ENCODE measurements at regions of chr3 and their contacts with region 1.

Region 1: DNA sequence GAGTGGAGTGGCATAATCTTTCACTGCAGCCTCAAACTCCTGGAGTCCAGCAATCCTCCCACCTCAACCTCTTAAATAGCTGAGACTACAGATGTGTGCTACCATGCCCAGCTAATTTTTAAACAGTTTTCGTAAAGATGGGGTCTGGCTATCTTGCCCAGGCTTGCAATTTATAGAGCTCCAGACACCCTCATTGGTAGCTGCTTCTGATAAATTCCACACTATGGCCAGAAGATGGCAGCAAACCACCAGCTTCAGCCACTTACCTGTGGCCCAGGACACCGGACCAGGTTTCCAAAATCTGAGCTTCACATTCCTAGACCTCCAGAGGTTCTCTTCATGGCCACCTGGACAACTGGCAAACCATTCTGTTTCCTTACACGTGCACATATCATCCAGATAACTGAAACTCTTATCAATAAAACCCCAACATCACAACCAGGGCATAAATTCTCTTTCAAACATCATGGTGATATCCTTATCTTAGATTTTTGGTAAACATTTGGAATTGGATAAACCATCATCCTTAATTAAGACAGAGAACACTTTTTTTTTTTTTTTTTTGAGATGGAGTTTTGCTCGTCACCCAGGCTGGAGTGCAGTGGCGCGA is 28.9 kb downstream of the FBXW12 start:
- DNase-seq: peak; percentile 73
- ATAC-seq: peak; percentile 83
- H3K4me3 Mint-ChIP-seq: no peak overlapping the region
- H3K27ac Mint-ChIP-seq: no peak overlapping the region
- H3K4me1 Mint-ChIP-seq: no peaks in the 10 kb centered on the region
- H3K27me3 Mint-ChIP-seq: peaks cover 4% of the 10 kb centered on the region

Region 2: DNA sequence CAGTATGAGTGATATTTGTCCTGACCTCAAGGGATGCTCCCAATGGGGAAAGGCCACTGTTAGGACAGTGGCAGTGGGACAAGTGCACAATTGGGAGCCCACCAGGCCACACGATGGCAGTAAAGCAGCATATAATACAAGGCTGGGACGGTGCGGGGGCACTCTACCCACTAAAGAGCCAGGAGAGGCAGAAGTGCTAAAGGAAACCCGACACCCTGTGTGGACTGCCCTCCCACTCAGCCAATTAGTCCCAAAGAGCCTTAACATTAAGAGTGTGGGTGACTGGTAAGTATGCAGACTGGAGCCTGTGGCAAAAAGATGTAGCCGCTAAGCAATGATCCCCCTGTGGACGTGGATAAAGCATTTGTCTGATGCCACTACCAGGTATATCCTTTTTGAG is 168.2 kb before region 1 on chr3:
- CTCF ChIA-PET with region 1: interaction called, 10 read pairs
- DNase-seq: peak; percentile 81
- ATAC-seq: peak; percentile 98
- H3K4me3 Mint-ChIP-seq: no peak overlapping the region
- H3K27ac Mint-ChIP-seq: no peak overlapping the region
- H3K4me1 Mint-ChIP-seq: peaks cover 7% of the 10 kb centered on the region
- H3K27me3 Mint-ChIP-seq: peaks cover 3% of the 10 kb centered on the region

Region 3: DNA sequence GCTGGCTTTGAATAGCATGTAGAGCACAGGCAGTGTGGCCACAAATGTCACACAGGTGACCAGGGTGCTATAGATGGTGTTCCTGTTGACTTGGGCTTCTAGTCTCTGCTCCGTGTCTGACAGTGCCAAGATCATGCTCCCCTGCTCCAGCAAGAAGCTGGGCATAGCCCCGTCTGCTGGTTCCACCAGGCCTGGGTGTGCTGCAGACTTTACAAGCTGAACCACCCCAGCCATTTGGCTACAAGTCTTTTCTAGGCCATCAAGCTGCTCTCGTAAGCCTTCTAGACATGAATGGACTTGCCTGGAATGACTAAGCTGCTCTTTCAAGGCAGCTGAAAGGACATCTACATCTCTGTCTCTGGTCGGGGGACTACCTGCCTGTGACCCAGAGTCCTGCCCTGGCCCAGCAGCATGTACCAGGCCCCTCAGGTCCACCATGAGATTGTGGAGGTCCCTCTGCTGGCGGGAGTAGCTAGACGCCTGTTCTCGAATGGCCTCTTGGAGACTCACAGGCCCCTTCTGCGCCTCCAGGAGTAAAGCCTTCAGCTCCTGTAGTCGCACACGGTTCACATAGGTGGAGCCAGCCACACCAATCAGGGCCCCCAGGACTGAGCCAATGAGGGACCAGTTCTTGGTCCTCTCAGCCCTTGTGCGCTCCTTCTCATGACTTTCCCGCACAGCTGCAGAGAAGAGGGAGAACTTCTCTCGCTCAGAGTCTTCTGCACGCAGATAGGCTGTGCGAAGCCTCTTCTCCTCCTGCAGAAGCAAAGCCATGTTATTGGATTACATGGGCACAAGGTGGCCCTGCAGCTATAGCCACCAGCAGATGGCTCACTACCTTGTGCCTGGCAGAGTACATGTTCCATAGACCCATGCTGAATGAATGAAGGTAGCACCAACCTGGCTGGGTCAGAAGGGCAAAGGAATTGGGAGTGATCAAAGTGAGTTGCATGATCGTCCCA is 31.8 kb after region 1 on chr3:
- CTCF ChIA-PET with region 1: interaction called, 161 read pairs
- DNase-seq: no peak
- ATAC-seq: no peak
- H3K4me3 Mint-ChIP-seq: no peak overlapping the region
- H3K27ac Mint-ChIP-seq: no peak overlapping the region
- H3K4me1 Mint-ChIP-seq: peaks cover 18% of the 10 kb centered on the region
- H3K27me3 Mint-ChIP-seq: peaks cover 11% of the 10 kb centered on the region

Region 4: DNA sequence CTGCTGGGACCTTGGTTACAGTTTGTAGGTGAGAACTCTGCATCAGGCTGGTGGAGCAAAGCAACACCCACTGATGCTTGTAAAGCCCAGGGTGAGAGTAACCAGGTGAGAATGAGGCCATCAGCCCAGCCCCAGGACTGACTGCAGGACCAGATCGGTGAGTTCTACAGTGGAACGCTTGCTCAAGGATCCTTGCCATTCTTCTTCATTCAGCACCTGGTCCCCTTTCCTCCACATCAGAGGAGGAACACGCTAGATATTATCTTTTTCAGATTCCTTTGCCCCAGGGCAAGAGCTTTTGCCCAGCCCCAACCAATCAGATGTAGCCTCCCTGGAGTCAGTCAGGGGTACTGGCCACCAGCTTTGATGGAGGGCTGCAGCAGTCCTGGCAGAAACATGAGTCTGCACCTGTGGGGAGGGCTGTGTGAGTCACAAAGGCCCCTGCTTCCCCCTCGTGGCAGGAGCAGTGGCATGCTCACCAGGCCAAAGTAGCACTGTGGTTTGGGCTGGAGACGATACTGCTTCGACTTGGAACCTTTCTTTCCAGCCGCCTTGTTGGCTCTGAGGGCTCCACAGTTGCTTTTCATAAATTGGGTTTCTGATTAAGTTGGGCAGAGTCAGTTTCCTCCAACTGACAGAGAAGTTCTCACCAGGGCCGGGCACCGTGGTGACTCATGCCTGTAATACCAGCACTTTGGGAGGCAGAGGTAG is 106.6 kb after region 1 on chr3:
- CTCF ChIA-PET with region 1: interaction called, 30 read pairs
- DNase-seq: peak; percentile 89
- ATAC-seq: peak; percentile 83
- H3K4me3 Mint-ChIP-seq: peak overlapping the region; percentile 16
- H3K27ac Mint-ChIP-seq: peak overlapping the region; percentile 77
- H3K4me1 Mint-ChIP-seq: peaks cover 40% of the 10 kb centered on the region
- H3K27me3 Mint-ChIP-seq: peaks cover 6% of the 10 kb centered on the region

Region 5: DNA sequence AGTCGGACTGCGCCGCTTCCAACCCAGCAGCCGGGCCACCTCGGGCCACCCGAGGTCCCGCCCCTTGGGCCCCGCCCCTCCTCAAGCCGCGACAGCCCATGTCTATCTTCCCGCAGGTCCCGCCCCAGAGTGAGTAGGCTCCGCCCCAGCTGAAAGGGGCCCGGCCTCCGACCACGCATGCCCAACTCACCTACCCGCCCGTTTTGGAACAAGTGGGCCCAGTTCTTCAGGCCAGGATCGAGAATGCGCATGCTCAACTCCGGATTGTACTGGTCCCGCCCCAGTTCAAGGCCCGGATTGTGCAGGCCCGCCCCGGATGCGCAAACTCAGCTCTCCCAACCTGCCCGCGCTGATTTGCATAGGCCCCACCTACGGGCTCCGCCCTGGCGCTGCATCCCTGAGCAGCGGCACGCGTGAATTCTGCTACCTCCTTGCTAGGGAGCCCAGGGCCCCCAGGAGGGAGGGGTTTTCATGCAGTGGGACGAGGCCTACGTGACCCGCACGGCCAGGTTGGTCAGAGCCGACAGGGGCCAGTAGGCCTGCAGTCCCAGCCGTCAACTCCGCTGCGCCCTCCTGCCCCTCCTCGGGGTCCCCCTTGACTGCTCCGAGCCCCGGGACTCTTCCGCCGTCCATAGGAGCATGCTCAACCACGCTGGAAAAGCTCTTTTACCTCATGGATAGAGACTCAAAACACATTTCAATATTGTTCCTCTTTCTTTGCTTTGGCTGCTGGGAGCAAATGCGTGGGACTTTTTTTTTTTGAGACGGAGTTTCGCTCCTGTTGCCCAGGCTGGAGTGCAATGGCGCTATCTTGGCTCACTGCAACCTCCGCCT is 156.1 kb after region 1 on chr3 and contains the start of gene PFKFB4:
- CTCF ChIA-PET with region 1: interaction called, 32 read pairs
- DNase-seq: peak; percentile 100
- ATAC-seq: peak; percentile 89
- H3K4me3 Mint-ChIP-seq: peak within 1 kb of the TSS; percentile 84
- H3K27ac Mint-ChIP-seq: peak within 1 kb of the TSS; percentile 86
- H3K4me1 Mint-ChIP-seq: peaks cover 47% of the 10 kb centered on the region
- H3K27me3 Mint-ChIP-seq: no peaks in the 10 kb centered on the region
- total RNA-seq, gene PFKFB4: 12.2 to 26.9 TPM

Measured in activated CD8-positive, alpha-beta memory T cell treated with anti-CD3 and anti-CD28 coated beads, Interleukin-2, amount 10 ng/mL, durations not matched to agents 7 days and 5 days (primary cell).